ENCODE measurements at regions of chr4 and their contacts with region 1.

Region 1: GRCh38 chr4:175691791-175692190 is 120.3 kb downstream of the GPM6A start:
- DNase-seq: no peak
- ATAC-seq: no peak
- H3K4me3 ChIP-seq: no peak overlapping the region
- H3K4me3 Mint-ChIP-seq: no peak overlapping the region
- H3K27ac ChIP-seq: no peak overlapping the region
- H3K27ac Mint-ChIP-seq: no peak overlapping the region
- H3K4me1 ChIP-seq: no peaks in the 10 kb centered on the region
- H3K4me1 Mint-ChIP-seq: no peaks in the 10 kb centered on the region
- H3K27me3 ChIP-seq: no peaks in the 10 kb centered on the region
- H3K27me3 Mint-ChIP-seq: no peaks in the 10 kb centered on the region

Region 2: DNA sequence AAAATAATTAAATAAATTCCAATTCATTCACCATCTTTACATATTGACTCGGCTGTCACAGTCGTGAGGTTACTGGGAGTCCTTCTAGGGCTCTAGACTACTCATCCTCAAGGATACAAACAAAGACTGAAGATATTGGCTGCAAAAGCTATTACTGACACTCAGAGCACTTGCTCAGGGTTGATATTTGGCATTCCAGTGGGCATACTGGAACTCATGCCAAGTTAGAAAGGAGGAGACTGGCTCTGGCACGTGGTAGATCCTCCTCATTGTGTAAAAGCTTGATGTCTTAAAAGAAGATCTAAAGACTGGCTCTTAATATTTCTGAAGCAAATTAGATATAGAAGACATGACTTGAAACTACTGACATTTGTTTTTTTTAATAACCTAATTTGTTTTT is 52.4 kb before region 1 on chr4:
- CTCF ChIA-PET with region 1: no interaction called
- POLR2A ChIA-PET with region 1: no interaction called
- DNase-seq: no peak
- ATAC-seq: no peak
- H3K4me3 ChIP-seq: no peak overlapping the region
- H3K4me3 Mint-ChIP-seq: no peak overlapping the region
- H3K27ac ChIP-seq: no peak overlapping the region
- H3K27ac Mint-ChIP-seq: no peak overlapping the region
- H3K4me1 ChIP-seq: no peaks in the 10 kb centered on the region
- H3K4me1 Mint-ChIP-seq: no peaks in the 10 kb centered on the region
- H3K27me3 ChIP-seq: no peaks in the 10 kb centered on the region
- H3K27me3 Mint-ChIP-seq: no peaks in the 10 kb centered on the region

Region 3: DNA sequence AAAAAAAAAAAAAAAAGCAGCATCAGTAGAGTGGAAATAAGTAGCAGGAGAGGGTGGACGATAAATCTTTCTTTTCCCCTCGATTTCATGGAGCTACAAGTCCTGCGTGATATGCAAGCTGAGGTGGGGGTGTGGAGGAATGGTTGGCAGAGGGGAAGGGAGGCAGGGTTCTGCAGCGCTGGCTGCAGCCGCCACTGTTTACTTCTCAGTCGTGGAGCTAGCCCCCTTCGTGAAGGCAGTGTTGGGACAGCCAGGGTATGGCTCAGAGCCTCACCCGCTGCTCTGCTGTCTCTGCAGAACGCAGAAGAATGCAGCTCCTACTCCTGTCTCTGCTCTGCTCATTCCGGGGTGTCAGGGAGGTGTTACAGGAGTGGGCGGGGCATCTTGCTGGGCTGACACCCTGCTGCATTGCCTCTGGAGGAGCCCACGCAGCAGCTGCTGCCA is 20.3 kb before region 1 on chr4:
- CTCF ChIA-PET with region 1: no interaction called
- POLR2A ChIA-PET with region 1: interaction called in 1 of 2 experiments, 10 read pairs
- DNase-seq: no peak
- ATAC-seq: no peak
- H3K4me3 ChIP-seq: no peak overlapping the region
- H3K4me3 Mint-ChIP-seq: no peak overlapping the region
- H3K27ac ChIP-seq: no peak overlapping the region
- H3K27ac Mint-ChIP-seq: no peak overlapping the region
- H3K4me1 ChIP-seq: no peaks in the 10 kb centered on the region
- H3K4me1 Mint-ChIP-seq: no peaks in the 10 kb centered on the region
- H3K27me3 ChIP-seq: no peaks in the 10 kb centered on the region
- H3K27me3 Mint-ChIP-seq: no peaks in the 10 kb centered on the region